Calu3 (cell line): ENCODE measurements at regions of chr20 and their contacts with region 1.

Region 1: GRCh38 chr20:63520504-63520933 is at the start of gene PPDPF:
- DNase-seq: peak; percentile 90
- H3K4me3 Mint-ChIP-seq: peak within 1 kb of the TSS; percentile 95
- H3K27ac Mint-ChIP-seq: peak within 1 kb of the TSS; percentile 89
- H3K4me1 Mint-ChIP-seq: peaks cover 18% of the 10 kb centered on the region
- H3K27me3 Mint-ChIP-seq: no peaks in the 10 kb centered on the region
- CTCF ChIP-seq: no peak
- total RNA-seq, gene PPDPF: 517 and 545 TPM in 2 replicates

Region 2: GRCh38 chr20:63442100-63442493 is 78.4 kb before region 1 on chr20:
- CTCF ChIA-PET with region 1: interaction called, 6 read pairs
- intact Hi-C with region 1: loop called (anchors 5 kb)
- DNase-seq: peak; percentile 87
- H3K4me3 Mint-ChIP-seq: no peak overlapping the region
- H3K27ac Mint-ChIP-seq: no peak overlapping the region
- H3K4me1 Mint-ChIP-seq: peaks cover 6% of the 10 kb centered on the region
- H3K27me3 Mint-ChIP-seq: peaks cover 72% of the 10 kb centered on the region
- CTCF ChIP-seq: peak; percentile 54

Region 3: GRCh38 chr20:63495741-63496595 is 24.6 kb before region 1 on chr20:
- CTCF ChIA-PET with region 1: interaction called, 15 read pairs
- intact Hi-C with region 1: loop called (anchors 2 kb)
- DNase-seq: peak; percentile 80
- H3K4me3 Mint-ChIP-seq: peak overlapping the region; percentile 75
- H3K27ac Mint-ChIP-seq: no peak overlapping the region
- H3K4me1 Mint-ChIP-seq: no peaks in the 10 kb centered on the region
- H3K27me3 Mint-ChIP-seq: no peaks in the 10 kb centered on the region
- CTCF ChIP-seq: peak; percentile 95

Region 4: DNA sequence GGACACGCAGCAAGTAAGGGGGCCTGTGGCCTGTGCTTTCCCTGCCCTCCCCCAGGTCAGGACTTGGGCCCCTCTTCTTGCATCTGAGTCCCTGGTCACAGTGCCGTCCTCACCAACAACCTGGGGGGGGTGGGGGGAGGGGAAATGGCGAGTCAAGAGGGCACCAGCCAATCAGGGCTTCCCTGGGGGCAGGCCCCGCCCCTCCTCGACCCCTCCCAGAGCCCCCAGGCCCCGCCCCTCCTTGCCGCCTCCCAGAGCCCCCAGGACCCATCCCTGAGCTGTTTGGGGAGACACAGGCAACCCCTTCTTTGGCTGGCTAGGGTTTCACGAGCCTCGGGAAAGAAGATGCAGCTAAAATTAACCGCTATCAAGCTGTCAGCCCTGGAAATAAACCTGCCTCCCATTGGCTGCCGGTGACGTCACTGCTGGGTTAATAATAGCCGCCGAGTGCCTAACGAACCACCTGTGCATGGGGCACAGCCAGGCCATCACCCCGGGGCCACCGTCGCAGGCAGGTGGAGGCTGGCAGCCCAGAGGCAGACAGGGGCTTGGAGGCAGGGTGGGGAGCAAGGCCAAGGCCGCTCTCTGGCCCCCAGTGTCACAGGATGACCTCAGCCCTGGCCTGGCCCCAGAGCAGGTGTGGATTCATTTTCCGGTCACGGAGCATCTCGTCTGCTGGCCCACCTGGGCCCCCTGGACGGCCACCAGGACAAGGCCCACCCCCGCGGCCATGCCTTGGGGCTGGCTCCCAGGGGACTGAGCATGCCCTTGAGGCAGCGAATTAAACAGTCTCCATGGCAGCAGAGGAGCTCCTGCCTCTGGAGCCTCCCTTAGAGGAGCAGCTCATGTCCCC is 18.5 kb before region 1 on chr20:
- CTCF ChIA-PET with region 1: interaction called, 15 read pairs
- intact Hi-C with region 1: loop called (anchors 2 kb)
- DNase-seq: peak; percentile 54
- H3K4me3 Mint-ChIP-seq: no peak overlapping the region
- H3K27ac Mint-ChIP-seq: no peak overlapping the region
- H3K4me1 Mint-ChIP-seq: no peaks in the 10 kb centered on the region
- H3K27me3 Mint-ChIP-seq: peaks cover 41% of the 10 kb centered on the region
- CTCF ChIP-seq: no peak

Region 5: DNA sequence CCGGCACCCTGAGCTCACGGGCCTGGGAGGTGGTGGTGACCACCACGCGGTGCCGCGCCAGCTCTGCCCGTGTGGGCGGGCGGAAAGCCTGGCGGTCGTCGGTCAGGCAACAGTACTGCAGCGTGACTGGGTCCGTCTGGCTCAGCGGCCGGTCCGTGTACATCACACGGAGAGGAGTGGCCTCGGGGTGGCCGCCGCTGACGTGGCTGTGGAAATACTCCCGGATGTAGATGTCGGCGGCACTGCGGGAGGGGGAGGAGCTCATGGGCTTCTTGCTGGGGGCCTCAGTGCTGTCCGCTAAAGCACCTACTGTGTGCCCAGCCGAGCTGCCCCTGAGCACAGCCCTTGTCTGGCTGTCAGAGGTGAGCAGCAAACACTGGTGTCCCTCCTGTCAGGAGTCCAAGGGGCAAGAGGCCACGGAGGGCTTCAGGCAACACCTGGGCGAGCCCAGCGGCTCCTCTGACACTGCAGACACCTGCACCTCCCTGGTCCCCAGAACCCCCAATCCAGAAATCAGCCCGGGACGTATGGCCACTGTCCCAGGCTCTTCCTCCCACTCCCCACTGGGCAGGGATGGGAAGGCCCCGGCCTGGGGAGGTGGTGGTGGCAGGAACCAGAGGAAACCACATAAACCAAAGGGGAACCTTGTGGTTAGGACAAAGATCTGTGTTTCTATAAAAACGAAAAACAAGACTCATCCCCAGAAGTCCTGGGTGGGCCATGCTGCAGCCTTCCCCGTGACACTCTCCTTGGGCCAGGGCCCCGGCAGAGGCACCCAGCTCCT is 47.1 kb after region 1 on chr20:
- CTCF ChIA-PET with region 1: no interaction called
- intact Hi-C with region 1: no loop called
- DNase-seq: no peak
- H3K4me3 Mint-ChIP-seq: no peak overlapping the region
- H3K27ac Mint-ChIP-seq: no peak overlapping the region
- H3K4me1 Mint-ChIP-seq: no peaks in the 10 kb centered on the region
- H3K27me3 Mint-ChIP-seq: no peaks in the 10 kb centered on the region
- CTCF ChIP-seq: no peak

Region 6: DNA sequence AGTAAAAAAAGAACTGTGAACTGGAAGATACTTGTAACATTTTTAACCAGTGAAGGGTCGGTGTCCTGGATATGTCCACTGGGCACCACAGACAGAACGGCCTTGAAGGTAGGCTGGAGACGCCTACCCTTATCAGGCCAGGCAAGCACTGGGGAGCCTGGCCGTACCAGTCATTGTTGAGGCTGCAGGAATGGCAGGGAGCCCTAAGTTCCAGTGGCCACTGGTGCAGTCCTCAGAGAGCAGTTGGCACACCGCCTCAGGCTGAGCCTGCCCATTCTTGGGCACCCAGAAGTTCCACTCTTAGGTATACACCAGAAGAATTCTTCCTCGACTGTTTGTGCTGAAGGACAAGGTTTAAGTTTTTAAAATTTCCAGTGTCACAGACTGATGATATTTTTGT is 395.0 kb after region 1 on chr20:
- CTCF ChIA-PET with region 1: no interaction called
- intact Hi-C with region 1: no loop called
- DNase-seq: no peak
- H3K4me3 Mint-ChIP-seq: no peak overlapping the region
- H3K27ac Mint-ChIP-seq: no peak overlapping the region
- H3K4me1 Mint-ChIP-seq: peaks cover 19% of the 10 kb centered on the region
- H3K27me3 Mint-ChIP-seq: no peaks in the 10 kb centered on the region
- CTCF ChIP-seq: no peak